Psoas muscle (tissue), 8 donors: ENCODE measurements at regions of chr19 and their contacts with region 1.

Region 1: GRCh38 chr19:19477728-19478383 is 37.5 kb downstream of the TSSK6 start:
- DNase-seq: peak in 1 of 2 donors; percentile 32
- ATAC-seq: no peak
- H3K4me3 ChIP-seq: no peak overlapping the region
- H3K27ac ChIP-seq: no peak overlapping the region
- H3K4me1 ChIP-seq: peaks cover 27% of the 10 kb centered on the region
- H3K27me3 ChIP-seq: no peaks in the 10 kb centered on the region
- CTCF ChIP-seq: no peak

Region 2: GRCh38 chr19:19438366-19439185 is 39.3 kb before region 1 on chr19:
- intact Hi-C with region 1: loop called in 1 of 2 experiments (anchors 1 kb)
- DNase-seq: no peak
- ATAC-seq: no peak
- H3K4me3 ChIP-seq: no peak overlapping the region
- H3K27ac ChIP-seq: no peak overlapping the region
- H3K4me1 ChIP-seq: peaks cover 22% of the 10 kb centered on the region
- H3K27me3 ChIP-seq: no peaks in the 10 kb centered on the region
- CTCF ChIP-seq: no peak